ENCODE measurements at regions of chr19 and their contacts with region 1.

Region 1: DNA sequence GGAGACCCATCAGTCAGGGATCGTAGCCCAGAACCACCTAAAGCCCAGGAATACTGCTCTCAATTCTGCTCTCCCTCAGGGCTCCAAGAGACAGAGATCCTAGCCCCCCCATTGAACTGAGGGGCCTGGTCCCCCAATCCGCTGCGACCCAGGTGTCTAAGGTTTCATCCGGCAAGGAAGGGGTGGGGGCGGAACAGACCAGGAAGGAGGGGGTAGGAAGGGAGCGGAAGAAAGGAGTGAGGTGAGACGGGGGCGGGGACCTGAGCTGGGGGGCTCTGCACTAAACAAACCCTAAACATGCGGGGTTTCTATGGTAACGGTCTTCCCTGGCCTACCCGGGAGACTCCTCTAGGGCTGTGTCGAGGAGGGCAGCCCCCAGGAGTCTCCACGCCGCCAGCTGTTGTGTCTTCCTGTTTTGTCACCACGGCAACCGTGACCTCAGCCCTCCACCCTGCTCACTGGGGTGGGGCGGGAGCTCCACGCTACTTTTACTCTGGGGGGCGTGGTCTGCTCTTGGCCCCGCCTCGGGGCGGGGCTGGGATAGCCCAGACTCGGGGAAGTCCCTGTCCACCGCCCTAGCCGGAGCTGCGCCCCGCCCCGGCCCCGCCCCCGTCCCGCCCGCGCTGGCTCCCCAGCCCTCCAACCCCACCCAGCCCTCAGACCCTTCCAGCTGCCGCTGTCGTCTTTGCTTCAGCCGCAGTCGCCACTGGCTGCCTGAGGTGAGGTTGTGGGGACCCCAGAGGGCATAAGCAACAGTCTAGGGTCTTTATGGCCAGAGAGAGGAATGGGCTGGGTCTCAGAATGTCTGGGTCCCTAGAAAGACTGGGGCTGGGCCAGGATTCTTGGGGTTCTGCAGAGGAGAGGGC is at the start of gene MYADM:
- DNase-seq: peak; percentile 99 to 100 (median 100)
- ATAC-seq: peak; percentile 75
- H3K4me3 ChIP-seq: peak within 1 kb of the TSS; percentile 100
- H3K4me3 Mint-ChIP-seq: peak within 1 kb of the TSS; percentile 99
- H3K27ac ChIP-seq: peak within 1 kb of the TSS; percentile 97 to 100
- H3K27ac Mint-ChIP-seq: peak within 1 kb of the TSS; percentile 99
- H3K4me1 ChIP-seq: peaks cover 59% of the 10 kb centered on the region
- H3K4me1 Mint-ChIP-seq: peaks cover 46% of the 10 kb centered on the region
- H3K27me3 ChIP-seq: no peaks in the 10 kb centered on the region
- H3K27me3 Mint-ChIP-seq: no peaks in the 10 kb centered on the region
- CTCF ChIP-seq: no peak
- total RNA-seq, gene MYADM: 444 to 448 TPM

Region 2: DNA sequence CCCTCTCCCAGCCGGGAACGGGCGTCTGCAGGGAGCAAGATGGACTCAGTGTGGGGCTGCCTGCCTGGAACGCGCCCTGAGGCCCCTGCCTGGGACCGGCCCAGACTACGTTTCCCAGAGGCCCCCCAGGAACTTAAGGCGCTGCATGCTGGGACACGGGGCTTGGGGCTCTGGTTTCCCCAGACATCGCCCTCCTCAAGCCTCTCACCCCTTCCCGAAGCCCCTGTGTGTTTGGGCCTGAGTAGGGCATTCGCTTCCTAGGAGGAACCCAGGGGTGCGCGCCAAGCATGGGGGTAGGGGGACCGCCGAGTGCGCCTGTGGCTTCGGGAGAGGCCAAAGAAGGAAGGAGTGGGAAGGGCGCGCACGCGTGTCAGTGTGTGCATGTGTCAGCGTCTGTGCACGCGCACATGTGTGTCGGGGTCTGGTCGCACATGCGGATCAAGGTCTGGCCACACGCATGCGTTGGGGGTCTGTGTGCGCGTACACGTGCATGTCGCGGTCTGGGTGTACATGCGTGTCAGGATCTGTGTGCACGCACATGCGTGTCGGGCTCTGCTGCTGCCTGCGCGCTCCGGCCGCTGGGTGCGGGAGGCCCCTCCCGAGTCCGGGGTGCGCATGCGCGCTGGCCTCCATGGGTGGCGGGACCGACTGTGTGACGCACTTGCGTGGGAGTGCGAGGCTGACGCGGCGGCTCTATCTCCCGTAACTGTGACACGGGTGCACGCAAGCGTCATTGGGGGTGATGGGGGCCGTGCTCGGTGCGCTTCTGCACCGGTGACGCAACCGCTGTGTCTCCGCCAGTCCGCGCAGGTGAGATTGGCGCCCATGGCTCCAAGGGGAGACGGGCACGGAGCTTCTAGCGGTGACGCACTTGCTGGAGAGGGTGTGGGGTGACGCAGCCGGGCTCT is 313.3 kb before region 1 on chr19:
- CTCF ChIA-PET with region 1: no interaction called
- POLR2A ChIA-PET with region 1: interaction called, 3 read pairs
- intact Hi-C with region 1: loop called in 1 of 2 experiments (anchors 10 kb)
- DNase-seq: peak; percentile 81 to 98 (median 91)
- ATAC-seq: peak; percentile 68
- H3K4me3 ChIP-seq: peak overlapping the region; percentile 89
- H3K4me3 Mint-ChIP-seq: peak overlapping the region; percentile 96
- H3K27ac ChIP-seq: peak overlapping the region; percentile 82 to 98
- H3K27ac Mint-ChIP-seq: peak overlapping the region; percentile 99
- H3K4me1 ChIP-seq: peaks cover 17% of the 10 kb centered on the region
- H3K4me1 Mint-ChIP-seq: peaks cover 42% of the 10 kb centered on the region
- H3K27me3 ChIP-seq: no peaks in the 10 kb centered on the region
- H3K27me3 Mint-ChIP-seq: peaks cover 11% of the 10 kb centered on the region
- CTCF ChIP-seq: no peak

Region 3: GRCh38 chr19:53671663-53672062 is 195.8 kb before region 1 on chr19:
- CTCF ChIA-PET with region 1: no interaction called
- POLR2A ChIA-PET with region 1: no interaction called
- intact Hi-C with region 1: no loop called
- DNase-seq: no peak
- ATAC-seq: no peak
- H3K4me3 ChIP-seq: no peak overlapping the region
- H3K4me3 Mint-ChIP-seq: no peak overlapping the region
- H3K27ac ChIP-seq: no peak overlapping the region
- H3K27ac Mint-ChIP-seq: no peak overlapping the region
- H3K4me1 ChIP-seq: no peaks in the 10 kb centered on the region
- H3K4me1 Mint-ChIP-seq: no peaks in the 10 kb centered on the region
- H3K27me3 ChIP-seq: no peaks in the 10 kb centered on the region
- H3K27me3 Mint-ChIP-seq: no peaks in the 10 kb centered on the region
- CTCF ChIP-seq: no peak

Region 4: DNA sequence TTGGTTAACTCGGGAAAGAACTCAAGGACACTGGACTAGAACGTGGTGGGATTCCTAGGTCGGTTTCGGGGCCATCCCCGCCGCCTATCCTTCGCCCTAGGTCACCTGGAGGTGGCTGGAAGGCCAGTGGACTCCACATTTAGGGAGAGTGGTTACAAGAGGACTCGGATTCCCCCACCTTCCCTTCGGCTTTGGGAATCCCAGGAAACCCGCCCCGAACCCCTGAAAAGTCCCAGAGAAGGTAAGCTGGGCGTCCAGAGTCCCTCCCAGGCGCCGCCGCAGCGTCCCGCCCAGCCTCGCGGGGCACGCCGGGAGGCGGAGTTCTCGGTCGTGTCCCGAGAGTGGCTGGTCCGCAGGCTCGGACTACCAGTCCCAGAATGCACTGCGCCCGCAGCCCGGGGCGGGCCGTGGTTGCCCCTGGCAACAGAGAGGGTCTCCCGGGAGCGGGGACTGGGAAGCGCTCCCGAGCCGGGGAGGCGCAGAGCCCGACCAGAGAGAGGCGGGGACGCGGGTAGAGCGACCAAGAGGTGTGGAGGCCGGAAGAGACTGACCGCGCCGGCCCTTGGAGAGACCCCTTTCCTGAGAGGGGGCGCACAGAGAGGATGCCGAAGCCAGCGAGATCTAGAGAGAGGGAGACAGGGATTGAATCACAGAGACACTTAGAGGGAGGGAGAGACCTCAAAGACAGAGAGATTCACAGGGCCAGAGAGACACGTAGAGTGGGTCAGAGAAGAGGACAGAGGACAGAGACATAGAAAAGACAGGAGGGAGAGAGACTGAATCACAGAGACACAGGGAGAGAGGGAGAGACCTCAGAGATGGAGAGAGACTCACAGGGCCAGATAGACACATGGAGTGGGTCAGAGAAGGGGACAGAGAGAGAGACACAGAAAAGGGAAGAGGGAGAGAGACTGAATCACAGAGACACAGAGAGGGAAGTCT is 12.0 kb after region 1 on chr19:
- CTCF ChIA-PET with region 1: interaction called, 17 read pairs
- POLR2A ChIA-PET with region 1: interaction called, 71 read pairs
- intact Hi-C with region 1: loop called (anchors 1 to 2 kb)
- DNase-seq: peak; percentile 66 to 90 (median 75)
- ATAC-seq: peak; percentile 78
- H3K4me3 ChIP-seq: peak overlapping the region; percentile 58
- H3K4me3 Mint-ChIP-seq: no peak overlapping the region
- H3K27ac ChIP-seq: no peak overlapping the region
- H3K27ac Mint-ChIP-seq: peak overlapping the region; percentile 51
- H3K4me1 ChIP-seq: peaks cover 81% of the 10 kb centered on the region
- H3K4me1 Mint-ChIP-seq: peaks cover 48% of the 10 kb centered on the region
- H3K27me3 ChIP-seq: peaks cover 44 to 48% of the 10 kb centered on the region in 2 experiments
- H3K27me3 Mint-ChIP-seq: peaks cover 28% of the 10 kb centered on the region
- CTCF ChIP-seq: no peak

Region 5: GRCh38 chr19:53977429-53977990 is 110.1 kb after region 1 on chr19:
- CTCF ChIA-PET with region 1: no interaction called
- POLR2A ChIA-PET with region 1: no interaction called
- intact Hi-C with region 1: loop called in 1 of 2 experiments (anchors 5 kb)
- DNase-seq: peak; percentile 32 to 86 (median 54)
- ATAC-seq: peak; percentile 75
- H3K4me3 ChIP-seq: peak overlapping the region; percentile 51
- H3K4me3 Mint-ChIP-seq: peak overlapping the region; percentile 82
- H3K27ac ChIP-seq: no peak overlapping the region
- H3K27ac Mint-ChIP-seq: no peak overlapping the region
- H3K4me1 ChIP-seq: peaks cover 33% of the 10 kb centered on the region
- H3K4me1 Mint-ChIP-seq: peaks cover 38% of the 10 kb centered on the region
- H3K27me3 ChIP-seq: peaks cover 57 to 58% of the 10 kb centered on the region in 2 experiments
- H3K27me3 Mint-ChIP-seq: peaks cover 78% of the 10 kb centered on the region
- CTCF ChIP-seq: no peak

Region 6: DNA sequence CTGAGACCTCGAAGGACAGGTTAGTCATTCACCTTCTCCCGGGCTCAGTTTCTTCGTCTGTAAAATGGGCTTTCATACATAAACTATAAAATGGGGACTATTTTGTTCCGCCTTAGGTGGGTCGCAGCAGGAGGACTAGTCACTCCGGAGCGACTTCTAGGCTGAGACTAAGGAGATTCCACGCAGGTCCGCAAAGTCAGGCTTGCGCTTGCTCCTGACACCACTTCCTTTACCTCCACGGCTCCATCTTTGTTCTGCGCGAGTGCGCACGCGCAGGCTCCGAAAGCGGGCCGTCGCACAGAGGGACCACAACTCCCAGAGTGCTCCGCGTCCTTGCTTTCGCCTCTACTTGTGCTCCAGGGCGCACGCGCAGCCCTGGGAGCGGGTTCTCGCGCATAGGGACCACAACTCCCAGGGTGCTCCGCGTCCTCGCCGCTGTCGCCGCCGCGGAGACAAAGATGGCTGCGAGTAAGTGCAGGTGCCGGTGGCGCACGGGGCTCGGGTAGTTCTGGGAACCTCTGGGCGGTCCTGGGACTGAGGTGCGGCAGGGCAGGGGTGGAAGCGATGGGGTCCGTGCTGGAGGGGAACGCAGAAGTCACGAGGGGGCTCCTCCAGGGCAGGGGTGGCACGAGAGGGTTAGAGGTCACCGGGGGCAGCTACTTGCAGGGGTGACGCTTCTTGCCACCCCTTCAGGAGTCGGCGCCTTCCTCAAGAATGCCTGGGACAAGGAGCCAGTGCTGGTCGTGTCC is 235.1 kb after region 1 on chr19 and contains the start of gene NDUFA3:
- CTCF ChIA-PET with region 1: no interaction called
- POLR2A ChIA-PET with region 1: no interaction called
- intact Hi-C with region 1: loop called (anchors 2 to 10 kb)
- DNase-seq: peak; percentile 93 to 100 (median 98)
- ATAC-seq: peak; percentile 99
- H3K4me3 ChIP-seq: peak within 1 kb of the TSS; percentile 98
- H3K4me3 Mint-ChIP-seq: peak within 1 kb of the TSS; percentile 97
- H3K27ac ChIP-seq: peak within 1 kb of the TSS; percentile 37 to 72
- H3K27ac Mint-ChIP-seq: peak within 1 kb of the TSS; percentile 82
- H3K4me1 ChIP-seq: peaks cover 24% of the 10 kb centered on the region
- H3K4me1 Mint-ChIP-seq: peaks cover 23% of the 10 kb centered on the region
- H3K27me3 ChIP-seq: no peaks in the 10 kb centered on the region
- H3K27me3 Mint-ChIP-seq: no peaks in the 10 kb centered on the region
- CTCF ChIP-seq: no peak
- total RNA-seq, gene NDUFA3: 63.0 to 63.5 TPM

Measured in CD4-positive, alpha-beta T cell (primary cell).